Common myeloid progenitor, CD34-positive (primary cell): ENCODE measurements at regions of chr21 and their contacts with region 1.

Region 1: GRCh38 chr21:36060159-36060921 is at the start of gene SETD4:
- DNase-seq: peak; percentile 91 to 93 (median 93)
- H3K4me3 ChIP-seq: peak within 1 kb of the TSS; percentile 79 to 98 (median 87)
- H3K27ac ChIP-seq: peak within 1 kb of the TSS; percentile 74 to 92
- H3K4me1 ChIP-seq: peaks cover 0 to 17% (median 10%) of the 10 kb centered on the region in 4 experiments
- H3K27me3 ChIP-seq: no peaks in the 10 kb centered on the region

Region 2: GRCh38 chr21:36104317-36105300 is 44.3 kb after region 1 on chr21:
- CTCF ChIA-PET with region 1: interaction called, 19 read pairs
- POLR2A ChIA-PET with region 1: interaction called, 4 read pairs
- DNase-seq: peak; percentile 74 to 92 (median 90)
- H3K4me3 ChIP-seq: peak overlapping the region in 5 of 7 experiments; percentile 1 to 49 (median 30)
- H3K27ac ChIP-seq: peak overlapping the region in 1 of 2 experiments; percentile 49
- H3K4me1 ChIP-seq: peaks cover 0 to 8% (median 3%) of the 10 kb centered on the region in 4 experiments
- H3K27me3 ChIP-seq: peaks cover 0 to 4% (median 2%) of the 10 kb centered on the region in 5 experiments